ENCODE measurements at regions of chr11 and their contacts with region 1.

Region 1: GRCh38 chr11:20609727-20610707 is 10.6 kb downstream of the SLC6A5 start:
- DNase-seq: no peak
- H3K4me3 ChIP-seq: no peak overlapping the region
- H3K27me3 ChIP-seq: peaks cover 13% of the 10 kb centered on the region
- CTCF ChIP-seq: peak; percentile 97

Region 2: GRCh38 chr11:20397281-20397680 is 212.7 kb before region 1 on chr11:
- CTCF ChIA-PET with region 1: interaction called, 49 read pairs
- POLR2A ChIA-PET with region 1: no interaction called
- DNase-seq: no peak
- H3K4me3 ChIP-seq: no peak overlapping the region
- H3K27me3 ChIP-seq: no peaks in the 10 kb centered on the region
- CTCF ChIP-seq: peak; percentile 72

Region 3: GRCh38 chr11:20403059-20403458 is 207.0 kb before region 1 on chr11:
- CTCF ChIA-PET with region 1: interaction called, 49 read pairs
- POLR2A ChIA-PET with region 1: no interaction called
- DNase-seq: no peak
- H3K4me3 ChIP-seq: no peak overlapping the region
- H3K27me3 ChIP-seq: no peaks in the 10 kb centered on the region
- CTCF ChIP-seq: no peak

Region 4: GRCh38 chr11:20599221-20600019 is 10.6 kb before region 1 on chr11 and contains the start of gene SLC6A5:
- CTCF ChIA-PET with region 1: interaction called, 11 read pairs
- POLR2A ChIA-PET with region 1: no interaction called
- DNase-seq: no peak
- H3K4me3 ChIP-seq: no peak within 1 kb of the TSS
- H3K27me3 ChIP-seq: peaks cover 59% of the 10 kb centered on the region
- CTCF ChIP-seq: no peak
- polyA plus RNA-seq, gene SLC6A5: not detected in 2 replicates